ENCODE measurements at regions of chr17 and their contacts with region 1.

Region 1: DNA sequence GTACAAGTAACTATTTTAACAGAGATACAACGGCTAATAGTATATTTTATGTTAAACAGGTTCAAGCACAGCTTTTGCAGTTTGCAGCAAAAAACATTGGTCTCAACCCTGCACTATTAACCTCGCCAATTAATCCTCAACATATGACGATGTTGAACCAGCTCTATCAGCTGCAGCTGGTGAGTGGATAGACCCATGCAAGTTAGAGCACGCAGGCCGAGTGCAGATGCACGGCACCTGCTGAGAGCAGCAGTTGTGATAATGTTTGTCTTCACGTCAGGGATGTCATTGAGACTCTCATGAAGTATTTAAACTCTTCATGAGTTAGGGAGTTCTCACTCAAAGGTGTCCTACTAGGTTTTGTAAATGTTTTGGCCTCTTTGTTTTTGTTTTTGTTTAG is 45.6 kb downstream of the TMC6 start:
- DNase-seq: no peak
- ATAC-seq: no peak
- H3K4me3 Mint-ChIP-seq: no peak overlapping the region
- H3K27ac Mint-ChIP-seq: no peak overlapping the region
- H3K4me1 Mint-ChIP-seq: no peaks in the 10 kb centered on the region
- H3K27me3 Mint-ChIP-seq: no peaks in the 10 kb centered on the region
- CTCF ChIP-seq: no peak

Region 2: GRCh38 chr17:77914385-77915254 is 168.4 kb before region 1 on chr17:
- CTCF ChIA-PET with region 1: no interaction called
- POLR2A ChIA-PET with region 1: no interaction called
- DNase-seq: peak; percentile 67
- ATAC-seq: peak; percentile 98
- H3K4me3 Mint-ChIP-seq: no peak overlapping the region
- H3K27ac Mint-ChIP-seq: 0 out of 2 replicates have a peak overlapping the region, but pooled peaks have one; percentile 5
- H3K4me1 Mint-ChIP-seq: peaks cover 41% of the 10 kb centered on the region
- H3K27me3 Mint-ChIP-seq: peaks cover 3% of the 10 kb centered on the region; the same call in 1 of the 2 replicates
- CTCF ChIP-seq: no peak

Region 3: GRCh38 chr17:78069695-78070094 is 13.3 kb before region 1 on chr17:
- CTCF ChIA-PET with region 1: interaction called, 20 read pairs
- POLR2A ChIA-PET with region 1: no interaction called
- DNase-seq: no peak
- ATAC-seq: no peak
- H3K4me3 Mint-ChIP-seq: no peak overlapping the region
- H3K27ac Mint-ChIP-seq: no peak overlapping the region
- H3K4me1 Mint-ChIP-seq: no peaks in the 10 kb centered on the region
- H3K27me3 Mint-ChIP-seq: no peaks in the 10 kb centered on the region
- CTCF ChIP-seq: no peak

Region 4: GRCh38 chr17:78107457-78107856 is 24.5 kb after region 1 on chr17:
- CTCF ChIA-PET with region 1: interaction called, 19 read pairs
- POLR2A ChIA-PET with region 1: no interaction called
- DNase-seq: no peak
- ATAC-seq: no peak
- H3K4me3 Mint-ChIP-seq: no peak overlapping the region
- H3K27ac Mint-ChIP-seq: peak overlapping the region; percentile 46; the same call in 1 of the 2 replicates
- H3K4me1 Mint-ChIP-seq: peaks cover 10% of the 10 kb centered on the region
- H3K27me3 Mint-ChIP-seq: no peaks in the 10 kb centered on the region
- CTCF ChIP-seq: no peak

Region 5: DNA sequence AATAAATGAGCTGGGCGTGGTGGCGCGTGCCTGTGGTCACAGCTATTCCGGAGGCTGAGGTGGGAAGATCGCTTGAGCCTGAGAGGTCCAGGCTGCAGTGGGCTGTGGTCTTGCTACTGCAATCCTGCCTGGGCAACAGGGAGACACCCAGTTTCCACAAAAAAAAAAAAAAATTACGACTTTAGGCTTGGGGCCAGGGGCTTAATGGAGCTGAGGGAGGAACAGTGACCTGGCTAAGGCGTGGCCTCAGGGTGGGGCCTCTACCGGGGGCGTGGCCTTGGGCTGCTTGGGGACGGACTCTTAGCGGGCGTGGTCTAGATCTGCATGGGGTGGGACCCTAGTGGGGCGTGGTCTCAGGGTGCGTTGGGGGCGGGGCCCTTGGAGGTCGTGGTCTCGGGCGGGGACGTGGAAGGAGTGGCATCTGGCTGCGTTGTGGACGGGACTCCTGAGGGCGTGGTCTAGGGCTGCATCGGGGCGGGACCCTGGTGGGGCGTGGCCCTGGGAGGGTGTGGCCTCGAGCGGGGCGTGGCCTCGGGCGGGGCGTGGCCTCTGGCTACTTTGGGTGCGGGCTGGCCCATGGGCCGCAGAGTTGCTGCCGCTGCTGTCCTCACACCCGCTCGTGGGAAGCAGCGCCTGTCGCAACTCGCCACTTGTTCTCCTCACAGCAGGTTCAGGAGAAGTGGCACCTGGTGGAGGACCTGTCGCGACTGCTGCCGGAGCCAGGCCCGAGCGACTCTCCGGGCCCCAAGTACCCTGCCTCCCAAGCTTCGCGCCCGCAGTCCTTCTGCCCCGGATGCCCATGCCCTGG is 57.4 kb after region 1 on chr17:
- CTCF ChIA-PET with region 1: interaction called, 18 read pairs
- POLR2A ChIA-PET with region 1: no interaction called
- DNase-seq: peak; percentile 100
- ATAC-seq: peak; percentile 94
- H3K4me3 Mint-ChIP-seq: peak overlapping the region; percentile 43
- H3K27ac Mint-ChIP-seq: peak overlapping the region; percentile 72; the same call in 1 of the 2 replicates
- H3K4me1 Mint-ChIP-seq: peaks cover 19% of the 10 kb centered on the region
- H3K27me3 Mint-ChIP-seq: 0 out of 2 replicates have a peak, but pooled peaks cover 3% of the 10 kb centered on the region
- CTCF ChIP-seq: no peak

Region 6: GRCh38 chr17:78176548-78177025 is 93.6 kb after region 1 on chr17:
- CTCF ChIA-PET with region 1: interaction called, 30 read pairs
- POLR2A ChIA-PET with region 1: no interaction called
- DNase-seq: peak; percentile 82
- ATAC-seq: peak; percentile 65
- H3K4me3 Mint-ChIP-seq: no peak overlapping the region
- H3K27ac Mint-ChIP-seq: no peak overlapping the region
- H3K4me1 Mint-ChIP-seq: peaks cover 42% of the 10 kb centered on the region
- H3K27me3 Mint-ChIP-seq: no peaks in the 10 kb centered on the region
- CTCF ChIP-seq: peak; percentile 84

Measured in WTC11 (cell line).